ENCODE measurements at regions of chr7 and their contacts with region 1.

Region 1: DNA sequence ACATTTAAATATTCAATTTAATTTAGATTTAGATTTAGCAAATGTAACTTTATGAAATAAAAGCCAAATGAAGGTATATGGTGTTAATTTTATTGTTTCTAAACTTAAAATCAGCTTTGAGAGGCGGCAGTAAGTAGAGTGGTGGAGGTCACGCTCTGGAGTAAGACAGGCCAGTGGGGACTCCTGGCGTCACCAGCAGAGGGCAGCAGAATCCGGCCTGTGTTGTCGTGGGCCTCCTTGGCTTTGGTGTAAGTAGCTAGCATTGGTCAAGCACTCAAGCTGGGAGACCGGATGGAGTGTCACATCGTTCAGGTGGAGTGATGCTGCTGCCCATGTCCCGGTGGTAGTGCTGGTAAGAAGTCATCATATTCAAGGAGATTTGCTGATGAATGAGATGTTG is 98.7 kb upstream of the DNAJB6 start:
- DNase-seq: no peak
- H3K4me3 Mint-ChIP-seq: no peak overlapping the region
- H3K27ac Mint-ChIP-seq: no peak overlapping the region
- H3K4me1 Mint-ChIP-seq: peaks cover 5% of the 10 kb centered on the region
- H3K27me3 Mint-ChIP-seq: no peaks in the 10 kb centered on the region

Region 2: GRCh38 chr7:157250605-157251228 is 12.6 kb after region 1 on chr7:
- CTCF ChIA-PET with region 1: interaction called, 16 read pairs
- POLR2A ChIA-PET with region 1: no interaction called
- intact Hi-C with region 1: no loop called
- DNase-seq: peak; percentile 57
- H3K4me3 Mint-ChIP-seq: no peak overlapping the region
- H3K27ac Mint-ChIP-seq: no peak overlapping the region
- H3K4me1 Mint-ChIP-seq: no peaks in the 10 kb centered on the region
- H3K27me3 Mint-ChIP-seq: no peaks in the 10 kb centered on the region

Region 3: DNA sequence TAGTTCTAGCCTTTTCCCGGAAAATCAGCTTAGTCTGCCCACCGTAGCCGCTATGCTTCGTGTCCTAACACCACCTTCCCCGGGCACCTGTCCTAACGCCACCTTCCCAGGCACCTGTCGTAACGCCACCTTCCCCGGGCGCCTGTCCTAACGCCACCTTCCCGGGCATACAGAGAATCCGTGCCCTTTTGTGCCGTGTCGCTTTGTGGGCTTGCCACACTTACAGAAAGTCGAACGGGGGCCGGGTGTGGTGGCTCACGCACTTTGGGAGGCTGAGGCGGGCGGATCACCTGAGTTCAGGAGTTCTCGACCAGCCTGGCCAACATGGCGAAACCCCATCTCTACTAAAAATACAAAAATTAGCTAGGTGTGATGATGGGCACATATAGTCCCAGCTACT is 25.1 kb after region 1 on chr7:
- CTCF ChIA-PET with region 1: no interaction called
- POLR2A ChIA-PET with region 1: no interaction called
- intact Hi-C with region 1: no loop called
- DNase-seq: no peak
- H3K4me3 Mint-ChIP-seq: no peak overlapping the region
- H3K27ac Mint-ChIP-seq: no peak overlapping the region
- H3K4me1 Mint-ChIP-seq: no peaks in the 10 kb centered on the region
- H3K27me3 Mint-ChIP-seq: no peaks in the 10 kb centered on the region

Region 4: GRCh38 chr7:157404845-157405481 is 166.9 kb after region 1 on chr7:
- CTCF ChIA-PET with region 1: no interaction called
- POLR2A ChIA-PET with region 1: no interaction called
- intact Hi-C with region 1: no loop called
- DNase-seq: peak; percentile 76
- H3K4me3 Mint-ChIP-seq: no peak overlapping the region
- H3K27ac Mint-ChIP-seq: no peak overlapping the region
- H3K4me1 Mint-ChIP-seq: peaks cover 12% of the 10 kb centered on the region
- H3K27me3 Mint-ChIP-seq: no peaks in the 10 kb centered on the region

Measured in activated CD4-positive, alpha-beta memory T cell treated with anti-CD3 and anti-CD28 coated beads for 36 hours (primary cell).